ENCODE measurements at regions of chr3 and their contacts with region 1.

Region 1: GRCh38 chr3:111967651-111968274 is 11.1 kb upstream of the ABHD10 start:
- DNase-seq: peak; percentile 93
- H3K4me3 Mint-ChIP-seq: no peak overlapping the region
- H3K27ac Mint-ChIP-seq: no peak overlapping the region
- H3K4me1 Mint-ChIP-seq: peaks cover 25% of the 10 kb centered on the region
- H3K27me3 Mint-ChIP-seq: no peaks in the 10 kb centered on the region

Region 2: GRCh38 chr3:111311709-111312235 is 656.0 kb before region 1 on chr3:
- CTCF ChIA-PET with region 1: no interaction called
- intact Hi-C with region 1: loop called (anchors 10 kb)
- DNase-seq: no peak
- H3K4me3 Mint-ChIP-seq: no peak overlapping the region
- H3K27ac Mint-ChIP-seq: peak overlapping the region; percentile 37
- H3K4me1 Mint-ChIP-seq: peaks cover 33% of the 10 kb centered on the region
- H3K27me3 Mint-ChIP-seq: no peaks in the 10 kb centered on the region

Region 3: GRCh38 chr3:111717601-111718000 is 250.2 kb before region 1 on chr3:
- CTCF ChIA-PET with region 1: interaction called, 159 read pairs
- intact Hi-C with region 1: loop called (anchors 1 kb)
- DNase-seq: peak; percentile 83
- H3K4me3 Mint-ChIP-seq: no peak overlapping the region
- H3K27ac Mint-ChIP-seq: no peak overlapping the region
- H3K4me1 Mint-ChIP-seq: no peaks in the 10 kb centered on the region
- H3K27me3 Mint-ChIP-seq: no peaks in the 10 kb centered on the region

Region 4: DNA sequence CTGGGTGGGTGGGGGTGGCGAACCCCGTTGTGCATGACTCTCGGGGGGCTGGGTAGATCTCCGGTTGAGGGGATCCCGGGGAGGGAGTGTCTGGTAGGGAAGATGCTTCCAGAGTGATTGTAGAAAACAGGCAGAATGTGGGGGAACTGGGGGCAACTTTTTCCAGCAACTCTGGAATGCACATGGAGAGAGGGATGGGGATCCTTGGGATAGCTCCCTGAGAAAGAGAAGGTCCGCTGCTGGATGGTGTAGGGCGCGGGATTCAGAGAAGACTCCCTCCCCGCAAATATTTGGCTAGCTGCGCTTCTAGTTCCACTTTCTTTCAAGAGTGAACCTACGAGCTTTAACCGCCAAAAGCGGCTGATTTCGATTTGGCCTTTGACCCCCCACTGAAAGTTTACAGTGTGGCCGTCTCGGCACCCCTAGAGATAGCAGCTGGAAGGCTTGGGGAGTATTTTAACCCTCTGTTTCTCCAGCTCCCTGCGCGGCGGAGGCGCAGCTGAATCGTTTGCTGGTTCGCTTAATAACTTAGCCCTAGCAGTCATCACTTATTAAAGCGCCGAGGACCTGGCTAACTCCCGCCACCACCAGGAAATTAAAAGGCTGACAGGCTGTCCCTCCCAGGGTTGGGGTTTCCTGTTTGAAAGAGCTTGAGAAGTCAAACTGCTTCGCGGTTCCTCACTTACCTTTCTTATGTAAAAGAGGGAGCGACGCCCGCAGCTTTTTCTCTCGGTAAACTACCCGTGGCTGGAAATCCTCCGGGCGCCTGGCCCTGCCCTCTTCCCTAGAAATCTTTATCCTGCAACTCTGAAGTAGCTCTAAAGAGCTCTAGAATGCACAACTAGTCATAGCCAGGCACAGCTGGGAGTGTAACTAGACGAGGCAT is 107.5 kb before region 1 on chr3:
- CTCF ChIA-PET with region 1: interaction called, 6 read pairs
- intact Hi-C with region 1: loop called (anchors 1 kb)
- DNase-seq: peak; percentile 75
- H3K4me3 Mint-ChIP-seq: peak overlapping the region; percentile 84
- H3K27ac Mint-ChIP-seq: no peak overlapping the region
- H3K4me1 Mint-ChIP-seq: peaks cover 10% of the 10 kb centered on the region
- H3K27me3 Mint-ChIP-seq: peaks cover 45% of the 10 kb centered on the region

Region 5: DNA sequence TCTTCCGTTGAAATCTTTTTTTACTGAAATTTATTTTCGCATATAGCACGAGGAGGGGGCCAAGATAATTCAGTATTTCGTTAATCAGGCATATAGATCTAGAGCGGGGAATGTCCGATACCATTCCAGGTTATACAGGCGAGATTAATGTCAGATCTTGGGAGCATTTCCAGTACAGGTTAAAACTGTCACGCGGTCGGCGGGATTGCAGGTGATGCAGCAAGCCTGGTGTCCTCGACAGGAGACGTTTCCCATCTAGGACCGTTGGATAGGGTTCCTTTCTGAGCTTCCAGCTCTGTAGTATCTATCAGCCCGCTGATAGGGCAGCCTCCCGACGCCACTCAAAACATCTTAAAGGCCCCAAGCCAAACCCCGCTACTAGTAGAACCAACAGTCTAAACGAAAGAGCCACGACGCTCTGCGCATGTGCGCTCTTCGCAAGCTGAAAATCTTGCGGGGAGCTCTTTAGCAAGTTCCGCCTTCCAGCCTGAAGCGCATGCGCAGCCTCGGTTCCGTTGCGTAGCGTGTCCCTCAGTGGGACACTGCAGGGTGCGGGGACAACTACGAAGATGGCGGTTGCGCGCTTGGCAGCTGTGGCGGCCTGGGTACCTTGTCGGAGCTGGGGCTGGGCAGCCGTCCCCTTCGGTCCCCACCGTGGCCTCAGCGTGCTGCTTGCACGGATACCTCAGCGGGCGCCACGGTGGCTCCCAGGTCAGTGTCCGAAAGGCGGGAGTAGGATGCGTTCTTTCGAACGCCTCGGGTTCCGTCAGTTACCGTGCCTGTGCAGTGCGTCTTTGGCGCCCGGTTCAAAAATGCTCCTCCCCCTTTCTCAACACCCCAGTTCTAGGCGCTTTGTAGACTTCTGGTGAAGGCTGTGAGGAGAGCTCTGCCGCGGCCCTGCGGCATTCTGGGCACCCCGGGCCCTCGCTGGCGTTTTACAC is 11.0 kb after region 1 on chr3 and contains the start of gene ABHD10:
- CTCF ChIA-PET with region 1: interaction called, 19 read pairs
- intact Hi-C with region 1: no loop called
- DNase-seq: peak; percentile 98
- H3K4me3 Mint-ChIP-seq: peak within 1 kb of the TSS; percentile 87
- H3K27ac Mint-ChIP-seq: peak within 1 kb of the TSS; percentile 89
- H3K4me1 Mint-ChIP-seq: peaks cover 38% of the 10 kb centered on the region
- H3K27me3 Mint-ChIP-seq: no peaks in the 10 kb centered on the region
- total RNA-seq, gene ABHD10: 53.1 to 54.6 TPM

Region 6: DNA sequence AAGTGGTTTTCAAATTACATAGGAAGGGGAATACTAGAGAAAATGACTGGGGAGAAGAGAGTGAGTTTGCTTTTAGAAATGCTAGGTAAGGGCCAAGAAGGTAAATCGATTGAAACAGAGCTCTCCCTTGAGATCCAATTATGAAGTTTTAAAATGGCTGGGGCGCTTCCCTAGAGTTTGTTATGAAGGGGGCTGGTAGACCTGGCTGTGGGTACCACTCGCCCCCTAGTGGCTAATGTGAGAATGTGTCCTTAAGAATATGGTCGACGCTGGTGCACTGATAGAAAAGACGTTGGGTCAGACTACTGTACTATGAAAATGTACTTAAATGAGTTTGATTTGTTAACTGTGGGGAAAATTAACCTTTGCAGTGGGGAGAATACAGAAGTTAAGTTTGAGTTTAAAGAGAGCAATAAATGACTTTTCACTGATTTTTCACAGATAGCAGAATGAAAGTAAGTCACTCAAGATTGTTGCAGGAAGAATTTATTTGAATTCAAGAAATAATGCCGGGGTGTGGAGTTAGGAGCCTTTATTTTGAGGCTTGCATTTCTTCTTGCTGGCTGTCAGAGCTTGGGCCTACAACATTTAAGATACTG is 75.9 kb after region 1 on chr3:
- CTCF ChIA-PET with region 1: interaction called, 11 read pairs
- intact Hi-C with region 1: loop called (anchors 1 kb)
- DNase-seq: peak; percentile 64
- H3K4me3 Mint-ChIP-seq: no peak overlapping the region
- H3K27ac Mint-ChIP-seq: no peak overlapping the region
- H3K4me1 Mint-ChIP-seq: peaks cover 3% of the 10 kb centered on the region
- H3K27me3 Mint-ChIP-seq: no peaks in the 10 kb centered on the region

Region 7: GRCh38 chr3:113377158-113377557 is 1409.4 kb after region 1 on chr3:
- CTCF ChIA-PET with region 1: no interaction called
- intact Hi-C with region 1: no loop called
- DNase-seq: no peak
- H3K4me3 Mint-ChIP-seq: no peak overlapping the region
- H3K27ac Mint-ChIP-seq: no peak overlapping the region
- H3K4me1 Mint-ChIP-seq: no peaks in the 10 kb centered on the region
- H3K27me3 Mint-ChIP-seq: no peaks in the 10 kb centered on the region